ENCODE measurements at regions of chr3 and their contacts with region 1.

Region 1: GRCh38 chr3:128969993-128970739 is 23.7 kb downstream of the CFAP92 start:
- DNase-seq: peak; percentile 71
- H3K4me3 Mint-ChIP-seq: no peak overlapping the region
- H3K27ac Mint-ChIP-seq: no peak overlapping the region
- H3K4me1 Mint-ChIP-seq: no peaks in the 10 kb centered on the region
- H3K27me3 Mint-ChIP-seq: peaks cover 74% of the 10 kb centered on the region
- CTCF ChIP-seq: peak; percentile 97

Region 2: GRCh38 chr3:128665362-128666038 is 304.7 kb before region 1 on chr3:
- CTCF ChIA-PET with region 1: no interaction called
- intact Hi-C with region 1: no loop called
- DNase-seq: peak; percentile 22
- H3K4me3 Mint-ChIP-seq: no peak overlapping the region
- H3K27ac Mint-ChIP-seq: no peak overlapping the region
- H3K4me1 Mint-ChIP-seq: peaks cover 8% of the 10 kb centered on the region
- H3K27me3 Mint-ChIP-seq: peaks cover 22% of the 10 kb centered on the region
- CTCF ChIP-seq: no peak

Region 3: GRCh38 chr3:128879125-128879969 is 90.8 kb before region 1 on chr3 and contains the start of gene ACAD9:
- CTCF ChIA-PET with region 1: interaction called, 10 read pairs
- intact Hi-C with region 1: no loop called
- DNase-seq: peak; percentile 100
- H3K4me3 Mint-ChIP-seq: peak within 1 kb of the TSS; percentile 81
- H3K27ac Mint-ChIP-seq: peak within 1 kb of the TSS; percentile 84
- H3K4me1 Mint-ChIP-seq: peaks cover 43% of the 10 kb centered on the region
- H3K27me3 Mint-ChIP-seq: peaks cover 12% of the 10 kb centered on the region
- CTCF ChIP-seq: no peak
- total RNA-seq, gene ACAD9: 112 and 124 TPM in 2 replicates

Region 4: DNA sequence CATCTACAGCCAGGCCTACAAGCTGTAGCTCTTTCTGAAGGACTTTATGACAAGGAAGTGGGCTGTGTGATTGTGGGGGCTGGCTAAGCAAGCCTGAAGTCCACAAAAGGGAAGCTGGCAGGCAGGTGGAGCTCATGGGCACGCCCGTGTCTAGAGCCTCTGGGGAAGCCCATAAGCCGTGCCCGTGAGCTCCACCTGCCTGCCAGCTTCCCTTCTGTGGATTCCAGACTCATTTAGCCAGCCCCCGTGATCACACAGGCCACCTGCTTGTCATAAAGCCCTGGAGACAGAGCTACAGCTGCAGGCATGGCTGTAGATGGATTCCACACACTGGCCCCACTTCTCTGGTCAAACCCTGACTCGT is 46.2 kb after region 1 on chr3:
- CTCF ChIA-PET with region 1: interaction called, 74 read pairs
- intact Hi-C with region 1: loop called (anchors 1 kb)
- DNase-seq: peak; percentile 79
- H3K4me3 Mint-ChIP-seq: no peak overlapping the region
- H3K27ac Mint-ChIP-seq: no peak overlapping the region
- H3K4me1 Mint-ChIP-seq: peaks cover 7% of the 10 kb centered on the region
- H3K27me3 Mint-ChIP-seq: peaks cover 46% of the 10 kb centered on the region
- CTCF ChIP-seq: peak; percentile 12

Region 5: DNA sequence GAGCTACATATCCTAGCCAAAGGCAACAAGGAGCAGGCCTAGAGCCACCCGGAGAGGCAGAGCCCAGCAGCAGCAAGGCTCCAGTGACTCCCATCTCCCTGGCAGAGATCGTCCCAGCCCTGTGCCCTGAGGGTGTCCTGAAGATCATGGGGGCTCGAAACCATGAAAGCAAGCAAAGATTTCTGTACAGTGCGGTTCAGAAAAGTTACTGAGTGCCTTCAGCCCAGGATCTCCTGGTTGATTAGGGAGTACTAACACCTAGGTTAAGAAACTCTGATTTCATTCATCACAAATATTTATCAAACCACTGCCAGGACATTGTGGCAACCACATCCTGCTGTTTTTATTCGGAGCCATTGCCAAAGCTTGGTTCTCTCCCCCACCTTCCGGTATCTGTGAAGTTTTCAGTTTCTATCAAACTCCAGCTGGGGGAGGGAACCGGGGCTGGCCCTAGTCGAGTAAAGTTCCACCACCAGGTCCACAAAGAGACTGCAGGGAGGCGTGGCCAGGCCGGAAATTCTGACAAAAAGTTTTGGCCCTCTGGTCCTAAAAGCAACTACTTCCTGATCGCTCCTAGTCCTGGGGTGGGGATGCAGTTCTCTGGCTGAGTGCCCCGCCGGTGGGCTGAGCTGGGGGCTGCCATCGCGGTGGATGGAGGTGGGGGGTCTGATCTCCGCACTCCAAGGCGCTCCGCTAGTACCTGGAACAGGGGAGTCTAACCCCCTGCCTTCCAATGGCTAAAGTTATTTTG is 150.3 kb after region 1 on chr3:
- CTCF ChIA-PET with region 1: interaction called, 16 read pairs
- intact Hi-C with region 1: no loop called
- DNase-seq: peak; percentile 94
- H3K4me3 Mint-ChIP-seq: peak overlapping the region; percentile 69
- H3K27ac Mint-ChIP-seq: peak overlapping the region; percentile 27
- H3K4me1 Mint-ChIP-seq: peaks cover 55% of the 10 kb centered on the region
- H3K27me3 Mint-ChIP-seq: no peaks in the 10 kb centered on the region
- CTCF ChIP-seq: no peak

Region 6: GRCh38 chr3:129249276-129250065 is 279.3 kb after region 1 on chr3 and contains the start of gene COPG1:
- CTCF ChIA-PET with region 1: interaction called, 29 read pairs
- intact Hi-C with region 1: loop called (anchors 1 kb)
- DNase-seq: peak; percentile 94
- H3K4me3 Mint-ChIP-seq: peak within 1 kb of the TSS; percentile 79
- H3K27ac Mint-ChIP-seq: peak within 1 kb of the TSS; percentile 91
- H3K4me1 Mint-ChIP-seq: peaks cover 28% of the 10 kb centered on the region
- H3K27me3 Mint-ChIP-seq: no peaks in the 10 kb centered on the region
- CTCF ChIP-seq: no peak
- total RNA-seq, gene COPG1: 295 and 302 TPM in 2 replicates